ENCODE measurements at regions of chr2 and their contacts with region 1.

Region 1: DNA sequence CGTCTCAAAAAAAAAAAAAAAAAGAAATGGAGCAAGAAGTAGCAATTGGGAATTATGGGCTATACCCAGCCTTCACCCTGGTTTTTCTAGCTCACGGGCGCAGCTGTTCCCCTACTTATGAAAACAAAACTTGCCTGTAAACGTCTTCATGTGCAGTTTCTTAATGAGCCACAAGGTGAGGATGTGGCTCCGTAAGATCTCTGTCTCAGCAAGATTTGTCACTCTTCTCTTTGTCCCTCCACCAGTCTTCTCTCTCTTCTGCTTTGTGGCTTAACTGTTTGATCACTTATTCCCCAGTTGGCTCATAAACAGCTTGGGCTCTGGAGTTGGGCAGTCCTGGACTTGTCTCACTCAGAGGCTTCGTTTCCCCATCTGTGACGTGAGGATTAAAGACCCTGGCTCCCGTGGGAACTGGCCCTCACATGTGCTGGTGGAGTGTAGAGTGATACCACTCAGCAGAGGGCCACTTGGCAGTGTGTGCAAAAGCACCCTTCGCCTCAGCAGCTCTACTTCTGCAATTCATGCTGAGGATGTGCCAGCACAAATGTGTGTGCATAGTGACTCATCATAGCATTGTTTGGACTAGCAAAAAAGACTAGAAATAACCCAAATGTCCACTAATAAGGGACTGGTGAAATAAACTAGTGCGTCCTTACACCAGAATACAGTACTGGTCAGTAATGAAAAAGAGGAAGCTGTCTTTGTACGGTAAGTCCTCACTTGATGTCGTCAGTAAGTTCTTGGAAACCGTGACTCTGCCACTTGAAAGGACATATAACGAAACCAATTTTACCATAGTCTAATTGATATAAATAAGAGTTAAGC is 8.7 kb downstream of the CEP68 start:
- DNase-seq: peak; percentile 38
- H3K4me3 Mint-ChIP-seq: no peak overlapping the region
- H3K27ac Mint-ChIP-seq: peak overlapping the region; percentile 68
- H3K4me1 Mint-ChIP-seq: peaks cover 38% of the 10 kb centered on the region
- H3K27me3 Mint-ChIP-seq: peaks cover 4% of the 10 kb centered on the region

Region 2: GRCh38 chr2:65129826-65130663 is 65.1 kb after region 1 on chr2 and contains the start of gene RAB1A:
- intact Hi-C with region 1: loop called (anchors 1 kb)
- DNase-seq: peak; percentile 98
- H3K4me3 Mint-ChIP-seq: peak within 1 kb of the TSS; percentile 98
- H3K27ac Mint-ChIP-seq: peak within 1 kb of the TSS; percentile 99
- H3K4me1 Mint-ChIP-seq: peaks cover 30% of the 10 kb centered on the region
- H3K27me3 Mint-ChIP-seq: peaks cover 16% of the 10 kb centered on the region
- total RNA-seq, gene RAB1A: 73.4 and 81.6 TPM in 2 replicates

Region 3: GRCh38 chr2:65169760-65170136 is 104.8 kb after region 1 on chr2:
- intact Hi-C with region 1: loop called (anchors 1 kb)
- DNase-seq: no peak
- H3K4me3 Mint-ChIP-seq: no peak overlapping the region
- H3K27ac Mint-ChIP-seq: no peak overlapping the region
- H3K4me1 Mint-ChIP-seq: no peaks in the 10 kb centered on the region
- H3K27me3 Mint-ChIP-seq: no peaks in the 10 kb centered on the region

Region 4: DNA sequence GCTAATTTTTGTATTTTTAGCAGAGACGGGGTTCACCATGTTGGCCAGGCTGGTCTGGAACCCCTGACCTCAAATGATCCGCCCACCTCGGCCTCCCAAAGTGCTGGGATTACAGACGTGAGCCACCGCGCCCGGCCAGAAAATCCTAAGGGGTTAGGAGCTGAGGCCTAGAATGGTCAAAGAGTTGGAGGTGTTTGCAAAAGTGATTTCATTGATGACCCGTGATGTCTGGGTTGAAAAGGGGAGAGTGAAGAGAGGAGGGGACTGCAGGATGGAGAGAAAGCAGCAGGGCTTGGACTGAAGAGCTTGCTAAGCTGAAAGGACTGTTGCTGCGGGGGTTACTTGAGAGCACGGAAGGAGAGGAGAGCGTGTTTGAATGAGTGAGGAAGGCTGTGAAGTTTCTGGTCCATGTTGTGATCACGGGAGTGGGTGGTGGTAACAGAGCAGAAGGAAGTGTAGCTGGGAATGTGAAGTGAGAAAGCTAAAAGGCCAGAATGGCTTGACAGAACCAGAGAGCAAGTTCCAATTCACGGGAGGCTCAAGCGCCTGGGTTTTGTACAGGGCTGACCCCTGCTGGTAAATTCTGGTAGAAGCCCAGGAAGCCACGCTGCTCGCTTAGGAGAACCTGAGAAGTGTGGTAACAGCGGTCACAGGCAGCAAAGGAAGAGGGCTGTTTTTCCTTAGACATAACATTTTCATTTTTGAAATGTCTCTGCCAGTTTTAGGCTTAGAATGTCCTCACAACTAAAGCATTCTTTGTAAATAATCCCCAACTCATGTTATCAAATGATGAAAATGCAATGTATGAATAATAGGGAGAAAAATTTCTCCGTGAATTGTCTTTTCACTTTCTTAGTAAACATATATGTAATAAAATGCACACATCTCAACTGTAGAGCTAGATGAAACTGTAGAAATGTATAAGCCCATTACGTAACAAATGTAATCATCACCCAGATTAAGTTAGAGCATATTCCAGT is 122.2 kb after region 1 on chr2:
- intact Hi-C with region 1: loop called (anchors 1 kb)
- DNase-seq: peak; percentile 50
- H3K4me3 Mint-ChIP-seq: no peak overlapping the region
- H3K27ac Mint-ChIP-seq: no peak overlapping the region
- H3K4me1 Mint-ChIP-seq: peaks cover 8% of the 10 kb centered on the region
- H3K27me3 Mint-ChIP-seq: peaks cover 16% of the 10 kb centered on the region